SK-N-SH (cell line): ENCODE measurements at regions of chr10 and their contacts with region 1.

Region 1: GRCh38 chr10:27223964-27224363 is 16.6 kb downstream of the ACBD5 start:
- DNase-seq: peak; percentile 26
- H3K4me3 ChIP-seq: no peak overlapping the region; a peak in 1 of 4 replicates
- H3K27ac ChIP-seq: no peak overlapping the region
- H3K4me1 ChIP-seq: no peaks in the 10 kb centered on the region
- H3K27me3 ChIP-seq: no peaks in the 10 kb centered on the region
- CTCF ChIP-seq: peak; percentile 84
- EP300 ChIP-seq: no peak
- RAD21 ChIP-seq: peak; percentile 47

Region 2: GRCh38 chr10:26939290-26939961 is 284.5 kb before region 1 on chr10:
- CTCF ChIA-PET with region 1: no interaction called
- POLR2A ChIA-PET with region 1: no interaction called
- DNase-seq: no peak
- H3K4me3 ChIP-seq: no peak overlapping the region
- H3K27ac ChIP-seq: no peak overlapping the region
- H3K4me1 ChIP-seq: no peaks in the 10 kb centered on the region
- H3K27me3 ChIP-seq: no peaks in the 10 kb centered on the region
- CTCF ChIP-seq: no peak
- EP300 ChIP-seq: no peak
- RAD21 ChIP-seq: no peak

Region 3: GRCh38 chr10:27235706-27236105 is 11.7 kb after region 1 on chr10:
- CTCF ChIA-PET with region 1: interaction called, 17 read pairs
- POLR2A ChIA-PET with region 1: interaction called, 3 read pairs
- DNase-seq: no peak
- H3K4me3 ChIP-seq: no peak overlapping the region
- H3K27ac ChIP-seq: no peak overlapping the region
- H3K4me1 ChIP-seq: peaks cover 3 to 4% of the 10 kb centered on the region in 2 experiments; a peak in 3 of 4 replicates
- H3K27me3 ChIP-seq: no peaks in the 10 kb centered on the region
- CTCF ChIP-seq: no peak
- EP300 ChIP-seq: no peak
- RAD21 ChIP-seq: no peak

Region 4: DNA sequence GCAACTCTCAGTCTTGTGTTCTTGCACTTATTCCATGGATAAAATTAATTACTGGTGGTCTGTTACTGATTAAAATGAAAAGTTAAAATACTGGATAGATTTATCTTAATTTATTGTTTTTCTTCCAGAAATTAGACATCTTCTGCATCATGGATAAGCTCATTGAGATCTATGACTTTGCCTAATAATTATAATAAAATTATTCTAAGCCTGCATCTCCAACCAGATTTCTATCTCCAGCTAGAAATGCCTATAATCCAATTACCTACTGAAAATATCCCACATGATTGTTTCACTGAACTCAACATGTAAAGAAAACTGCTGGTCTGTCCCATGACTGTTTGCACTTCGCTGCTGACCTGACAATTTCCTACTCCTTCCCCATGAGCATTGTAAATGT is 105.0 kb after region 1 on chr10:
- CTCF ChIA-PET with region 1: no interaction called
- POLR2A ChIA-PET with region 1: no interaction called
- DNase-seq: no peak
- H3K4me3 ChIP-seq: no peak overlapping the region
- H3K27ac ChIP-seq: no peak overlapping the region
- H3K4me1 ChIP-seq: peaks cover 0 to 10% of the 10 kb centered on the region in 2 experiments; a peak in 2 of 4 replicates
- H3K27me3 ChIP-seq: no peaks in the 10 kb centered on the region
- CTCF ChIP-seq: no peak
- EP300 ChIP-seq: peak in 1 of 2 experiments; percentile 90; a peak in 2 of 4 replicates
- RAD21 ChIP-seq: 0 out of 2 replicates have a peak, but pooled peaks have one; percentile 21

Region 5: GRCh38 chr10:27360581-27361172 is 136.7 kb after region 1 on chr10:
- CTCF ChIA-PET with region 1: interaction called, 23 read pairs
- POLR2A ChIA-PET with region 1: no interaction called
- DNase-seq: peak; percentile 71
- H3K4me3 ChIP-seq: no peak overlapping the region; a peak in 1 of 4 replicates
- H3K27ac ChIP-seq: no peak overlapping the region
- H3K4me1 ChIP-seq: no peaks in the 10 kb centered on the region; a peak in 1 of 4 replicates
- H3K27me3 ChIP-seq: no peaks in the 10 kb centered on the region
- CTCF ChIP-seq: peak; percentile 80
- EP300 ChIP-seq: no peak
- RAD21 ChIP-seq: peak; percentile 100